ENCODE measurements at regions of chr4 and their contacts with region 1.

Region 1: DNA sequence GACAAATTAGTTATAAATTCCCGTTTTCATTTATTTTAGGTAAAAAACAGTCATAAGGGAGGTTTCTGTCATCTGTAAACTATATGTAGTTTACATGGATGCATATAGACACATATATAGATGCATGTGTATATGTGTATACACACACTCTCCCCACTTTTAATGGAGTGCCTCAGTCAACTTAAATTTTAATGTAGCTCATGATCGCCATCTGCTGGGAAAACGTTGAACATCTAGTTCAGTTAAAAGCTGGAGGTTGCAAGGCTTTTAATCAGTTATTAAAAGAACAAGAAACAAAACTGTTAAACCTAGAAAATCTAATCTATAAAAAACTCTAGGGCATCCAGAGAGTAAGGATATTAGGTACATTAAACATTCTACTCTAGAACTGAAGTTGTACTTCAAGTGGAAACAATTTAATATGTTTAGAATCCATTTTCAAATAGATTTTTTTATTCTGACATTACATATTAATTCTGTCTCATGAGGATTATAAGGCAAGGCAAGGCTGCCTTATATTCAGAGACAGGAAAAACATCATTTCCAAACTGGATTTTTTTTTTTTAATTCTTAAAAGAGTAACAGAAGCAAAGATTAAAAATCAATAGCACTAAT is 122.6 kb downstream of the SHISA3 start:
- DNase-seq: peak; percentile 12
- ATAC-seq: peak; percentile 76
- H3K4me3 ChIP-seq: no peak overlapping the region
- H3K27ac ChIP-seq: no peak overlapping the region
- H3K4me1 ChIP-seq: no peaks in the 10 kb centered on the region
- H3K27me3 ChIP-seq: no peaks in the 10 kb centered on the region
- CTCF ChIP-seq: peak; percentile 68
- EP300 ChIP-seq: no peak
- POLR2A ChIP-seq: no peak
- RAD21 ChIP-seq: peak; percentile 49; the same call in 1 of the 2 replicates

Region 2: DNA sequence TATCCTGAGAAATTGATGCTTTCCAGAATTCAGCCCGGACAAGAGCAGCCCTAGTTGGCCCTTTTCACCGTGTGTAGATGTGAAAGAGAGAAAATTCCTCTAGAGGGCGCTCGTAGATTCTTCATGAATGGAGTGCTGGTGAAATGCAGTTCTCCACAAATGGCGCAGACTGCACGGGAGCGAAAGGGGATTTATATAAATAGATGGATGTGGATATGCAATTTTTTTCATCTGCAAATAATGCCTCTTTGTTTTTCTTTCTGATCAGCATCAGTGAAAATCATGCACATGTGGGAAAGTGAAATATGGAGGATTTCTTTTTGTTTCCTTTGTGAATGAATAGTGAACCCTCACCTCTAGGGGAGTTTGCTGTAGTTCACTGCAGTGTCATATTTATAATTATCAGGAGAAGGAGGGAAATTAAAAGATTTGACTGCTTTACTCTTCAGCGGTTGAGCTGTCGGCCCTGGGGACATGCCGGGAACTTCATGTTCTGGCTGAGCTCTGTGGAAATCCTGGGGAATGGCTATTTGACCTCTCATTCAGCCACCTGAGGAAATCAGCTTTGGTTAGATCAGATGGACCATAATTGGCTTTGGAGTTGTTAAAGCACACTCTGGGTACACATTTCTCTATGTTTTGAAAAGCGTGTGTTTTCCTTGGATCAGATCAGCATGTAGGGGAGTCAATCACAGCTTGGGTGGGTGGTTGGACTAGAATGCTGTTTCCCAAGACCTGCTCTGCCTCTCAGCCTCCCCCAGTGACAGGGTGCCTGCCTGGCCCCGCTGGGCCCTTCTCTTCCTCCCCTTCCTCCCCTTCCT is 237.6 kb before region 1 on chr4:
- CTCF ChIA-PET with region 1: interaction called, 11 read pairs
- POLR2A ChIA-PET with region 1: no interaction called
- in situ Hi-C with region 1: loop called (anchors 5 kb)
- intact Hi-C with region 1: loop called (anchors 1 kb)
- DNase-seq: peak; percentile 65
- ATAC-seq: peak; percentile 93
- H3K4me3 ChIP-seq: no peak overlapping the region
- H3K27ac ChIP-seq: no peak overlapping the region
- H3K4me1 ChIP-seq: 0 out of 2 replicates have a peak, but pooled peaks cover 5% of the 10 kb centered on the region
- H3K27me3 ChIP-seq: no peaks in the 10 kb centered on the region; a peak in 1 of 5 replicates
- CTCF ChIP-seq: peak; percentile 67
- EP300 ChIP-seq: no peak
- POLR2A ChIP-seq: no peak
- RAD21 ChIP-seq: peak; percentile 33; the same call in 1 of the 2 replicates

Region 3: DNA sequence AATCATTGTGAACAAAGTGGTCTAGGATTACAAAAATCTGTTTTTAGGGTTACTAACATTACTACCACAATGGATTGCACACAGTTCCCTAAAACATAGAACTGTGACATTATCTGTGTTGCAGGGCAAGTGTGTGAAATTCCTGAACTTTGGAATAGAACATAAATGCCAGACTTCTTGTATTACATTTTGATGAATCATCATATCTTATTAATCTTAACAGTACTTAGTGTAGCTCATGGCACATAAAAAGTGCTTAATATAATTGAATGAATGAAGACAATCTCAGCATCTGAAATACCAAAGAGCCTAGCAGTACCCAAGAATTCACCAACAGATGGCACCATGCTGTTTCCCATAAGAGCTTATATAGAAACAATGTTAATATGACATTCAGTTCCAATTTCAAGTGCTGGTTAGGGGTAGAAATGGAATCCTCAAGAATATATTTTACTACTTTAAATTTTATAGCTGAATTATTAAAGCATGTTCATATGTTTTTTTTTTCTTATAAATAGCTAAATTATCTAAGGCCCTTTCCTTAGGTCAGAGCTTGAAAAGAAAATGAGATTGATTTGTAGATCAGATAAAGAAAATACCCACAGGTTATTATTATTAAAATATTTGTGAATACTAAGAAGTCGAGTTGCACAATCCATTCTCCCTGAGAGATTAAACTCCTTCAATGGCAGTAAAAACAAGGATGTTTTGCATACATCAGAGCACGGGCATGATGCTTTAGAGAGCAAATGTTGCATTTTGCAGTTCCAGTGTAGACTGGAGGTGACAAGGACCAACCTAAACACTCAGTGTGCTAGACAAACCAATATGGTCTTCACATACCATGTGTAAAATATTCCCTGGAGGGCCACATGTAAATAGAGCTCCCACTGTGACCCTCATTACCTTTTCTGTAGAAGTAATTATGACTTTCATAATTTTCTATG is 148.3 kb before region 1 on chr4:
- CTCF ChIA-PET with region 1: interaction called, 13 read pairs
- POLR2A ChIA-PET with region 1: no interaction called
- in situ Hi-C with region 1: no loop called
- intact Hi-C with region 1: loop called (anchors 1 kb)
- DNase-seq: peak; percentile 19
- ATAC-seq: peak; percentile 52; the same call in 1 of the 3 replicates
- H3K4me3 ChIP-seq: no peak overlapping the region
- H3K27ac ChIP-seq: no peak overlapping the region
- H3K4me1 ChIP-seq: no peaks in the 10 kb centered on the region
- H3K27me3 ChIP-seq: no peaks in the 10 kb centered on the region
- CTCF ChIP-seq: peak; percentile 45
- EP300 ChIP-seq: no peak
- POLR2A ChIP-seq: no peak
- RAD21 ChIP-seq: no peak

Region 4: DNA sequence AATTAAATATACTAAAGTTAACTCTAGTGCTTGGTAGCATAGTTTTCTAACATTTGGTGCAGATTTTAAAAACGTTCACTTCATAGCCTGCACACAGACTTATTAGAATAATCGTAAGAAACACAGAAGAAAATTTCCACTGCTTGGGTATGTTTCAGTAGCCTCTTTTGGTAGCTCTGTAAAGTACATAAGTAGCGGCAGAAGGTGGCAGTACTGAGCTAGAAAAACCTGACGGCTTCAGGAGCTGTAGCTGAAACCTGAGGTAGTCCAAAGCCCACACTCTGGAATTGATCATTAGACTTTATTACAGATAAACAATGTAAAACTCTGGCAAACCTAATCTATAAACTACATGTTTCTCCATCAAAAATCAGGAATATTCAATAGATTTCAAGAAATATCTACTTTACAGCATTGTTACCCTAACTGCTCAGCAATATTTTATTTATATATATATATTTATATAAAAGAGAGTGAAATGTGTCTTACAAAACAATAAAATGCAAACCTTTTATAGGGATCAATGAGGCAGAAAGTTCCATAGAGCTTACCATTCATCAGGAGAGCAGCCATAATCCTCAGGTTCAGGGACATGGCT is 48.8 kb after region 1 on chr4:
- CTCF ChIA-PET with region 1: no interaction called
- POLR2A ChIA-PET with region 1: no interaction called
- in situ Hi-C with region 1: no loop called
- intact Hi-C with region 1: no loop called
- DNase-seq: peak; percentile 56
- ATAC-seq: peak; percentile 98
- H3K4me3 ChIP-seq: no peak overlapping the region
- H3K27ac ChIP-seq: no peak overlapping the region
- H3K4me1 ChIP-seq: no peaks in the 10 kb centered on the region
- H3K27me3 ChIP-seq: no peaks in the 10 kb centered on the region
- CTCF ChIP-seq: peak; percentile 76
- EP300 ChIP-seq: no peak
- POLR2A ChIP-seq: no peak
- RAD21 ChIP-seq: peak; percentile 67

Measured in HepG2 (cell line).